Heart right ventricle (tissue), 16 donors: ENCODE measurements at regions of chr10 and their contacts with region 1.

Region 1: GRCh38 chr10:86376852-86377796 is 10.5 kb upstream of the GRID1 start:
- DNase-seq: peak; percentile 56 to 80
- ATAC-seq: peak; percentile 83 to 93 (median 90)
- H3K4me3 ChIP-seq: peak overlapping the region in 7 of 10 donors; percentile 15 to 31 (median 26)
- H3K27ac ChIP-seq: no peak overlapping the region
- H3K4me1 ChIP-seq: peaks cover 0 to 6% (median 3%) of the 10 kb centered on the region in 9 donors
- H3K27me3 ChIP-seq: peaks cover 0 to 89% (median 64%) of the 10 kb centered on the region in 7 donors
- CTCF ChIP-seq: peak; percentile 96 to 100 (median 99)

Region 2: GRCh38 chr10:84613336-84614021 is 1763.6 kb before region 1 on chr10:
- intact Hi-C with region 1: loop called in 1 of 10 experiments (anchors 5 kb)
- DNase-seq: peak in 1 of 2 donors; percentile 9
- ATAC-seq: peak; percentile 61 to 95 (median 86)
- H3K4me3 ChIP-seq: no peak overlapping the region
- H3K27ac ChIP-seq: no peak overlapping the region
- H3K4me1 ChIP-seq: no peaks in the 10 kb centered on the region
- H3K27me3 ChIP-seq: peaks cover 0 to 8% (median 0%) of the 10 kb centered on the region in 7 donors
- CTCF ChIP-seq: peak; percentile 12 to 57 (median 49)

Region 3: GRCh38 chr10:84925495-84925894 is 1451.6 kb before region 1 on chr10:
- intact Hi-C with region 1: loop called in 2 of 10 experiments (anchors 5 kb)
- DNase-seq: no peak
- ATAC-seq: no peak
- H3K4me3 ChIP-seq: no peak overlapping the region
- H3K27ac ChIP-seq: no peak overlapping the region
- H3K4me1 ChIP-seq: no peaks in the 10 kb centered on the region
- H3K27me3 ChIP-seq: no peaks in the 10 kb centered on the region
- CTCF ChIP-seq: no peak

Region 4: DNA sequence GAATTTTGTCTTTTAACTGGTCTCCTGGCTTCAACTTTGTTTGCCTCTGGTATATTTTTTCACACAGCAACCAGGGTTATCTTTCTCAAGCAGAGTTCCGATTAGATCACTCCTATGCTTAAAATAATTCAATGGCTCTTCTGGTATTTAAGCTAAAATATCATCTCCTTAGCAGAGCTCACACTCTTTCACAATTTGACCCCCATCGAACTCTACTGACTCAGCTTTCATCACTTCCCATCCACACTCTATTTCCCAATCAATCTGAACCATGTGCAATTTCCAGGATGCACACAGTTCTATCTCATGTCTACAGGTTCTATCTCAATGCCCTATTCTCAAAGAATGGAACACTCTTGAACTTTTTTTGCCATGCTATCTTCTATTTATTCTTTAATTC is 820.0 kb before region 1 on chr10:
- intact Hi-C with region 1: loop called in 1 of 10 experiments (anchors 10 kb)
- DNase-seq: no peak
- ATAC-seq: peak in 1 of 8 donors; percentile 61
- H3K4me3 ChIP-seq: no peak overlapping the region
- H3K27ac ChIP-seq: no peak overlapping the region
- H3K4me1 ChIP-seq: no peaks in the 10 kb centered on the region
- H3K27me3 ChIP-seq: no peaks in the 10 kb centered on the region
- CTCF ChIP-seq: no peak

Region 5: DNA sequence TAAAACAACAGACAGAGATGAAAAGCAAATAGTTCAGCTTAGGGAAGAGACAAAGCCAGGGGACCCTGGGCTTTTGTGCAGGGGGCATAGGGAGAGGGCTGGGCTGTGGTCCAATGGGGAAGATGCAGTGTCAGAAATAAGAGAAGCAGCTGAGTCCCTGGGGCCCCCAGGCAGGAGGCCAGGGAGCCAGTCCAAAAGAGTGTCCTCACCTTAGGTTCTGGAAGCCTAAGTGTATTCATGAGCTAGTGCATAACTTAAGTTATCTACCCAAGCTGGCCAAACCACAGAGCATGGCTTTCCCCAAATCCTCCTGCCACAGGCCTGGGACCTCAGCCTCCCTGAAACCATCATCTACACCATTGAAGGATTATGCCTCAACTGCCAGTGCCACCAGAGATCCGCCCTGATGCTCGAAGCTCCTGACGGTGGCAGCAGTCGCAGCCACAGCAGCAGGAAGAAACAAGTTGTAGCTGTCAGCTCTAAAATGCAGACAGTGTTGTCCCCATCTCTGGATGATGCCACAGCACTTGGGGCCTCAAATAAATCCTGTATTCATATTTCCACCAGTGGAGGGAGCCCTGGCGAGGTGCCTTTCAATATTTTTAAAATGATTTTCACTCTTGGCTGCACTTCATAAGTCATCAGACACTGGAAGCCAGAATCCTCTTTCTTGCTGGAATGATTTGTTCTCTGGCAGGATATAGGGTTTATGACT is 585.1 kb before region 1 on chr10:
- intact Hi-C with region 1: loop called in 8 of 10 experiments (anchors 5 to 10 kb)
- DNase-seq: no peak
- ATAC-seq: peak in 3 of 8 donors; percentile 16 to 62 (median 45)
- H3K4me3 ChIP-seq: no peak overlapping the region
- H3K27ac ChIP-seq: no peak overlapping the region
- H3K4me1 ChIP-seq: peaks cover 0 to 16% (median 5%) of the 10 kb centered on the region in 9 donors
- H3K27me3 ChIP-seq: no peaks in the 10 kb centered on the region
- CTCF ChIP-seq: peak in 6 of 9 donors; percentile 27 to 54 (median 40)

Region 6: GRCh38 chr10:86100581-86101061 is 276.5 kb before region 1 on chr10:
- intact Hi-C with region 1: loop called in 1 of 10 experiments (anchors 10 kb)
- DNase-seq: no peak
- ATAC-seq: peak in 1 of 8 donors; percentile 65
- H3K4me3 ChIP-seq: no peak overlapping the region
- H3K27ac ChIP-seq: no peak overlapping the region
- H3K4me1 ChIP-seq: no peaks in the 10 kb centered on the region
- H3K27me3 ChIP-seq: no peaks in the 10 kb centered on the region
- CTCF ChIP-seq: peak in 8 of 9 donors; percentile 9 to 54 (median 34)

Region 7: DNA sequence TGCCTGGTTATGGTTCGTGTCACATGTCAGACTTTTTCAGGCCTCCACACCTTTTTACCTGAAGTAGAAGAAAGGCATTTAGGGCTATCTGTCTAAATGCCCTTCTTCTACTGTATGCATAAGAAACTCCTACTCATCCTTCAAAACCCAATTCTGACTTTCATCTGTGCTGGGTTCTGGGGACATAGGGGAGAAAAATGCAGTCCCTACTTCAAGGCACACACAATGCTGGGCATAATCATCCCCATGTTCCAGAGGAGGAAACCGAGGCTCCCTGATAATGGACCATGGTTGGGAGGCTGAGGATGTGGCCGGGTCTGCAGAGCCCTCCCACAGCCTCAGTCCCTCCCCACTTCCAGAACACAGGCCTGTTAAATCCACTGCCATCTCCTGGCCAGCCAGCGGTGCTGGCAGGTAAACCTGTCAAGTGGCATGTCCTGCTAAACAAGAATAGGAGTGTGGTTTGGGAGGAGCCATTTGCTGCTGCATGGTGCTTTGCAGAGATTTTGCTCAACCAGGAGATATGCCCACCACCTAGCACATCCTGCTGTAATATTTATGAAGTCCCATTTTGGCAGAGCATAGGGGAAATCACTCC is 42.5 kb before region 1 on chr10:
- intact Hi-C with region 1: no loop called
- DNase-seq: no peak
- ATAC-seq: no peak
- H3K4me3 ChIP-seq: no peak overlapping the region
- H3K27ac ChIP-seq: no peak overlapping the region
- H3K4me1 ChIP-seq: no peaks in the 10 kb centered on the region
- H3K27me3 ChIP-seq: peaks cover 0 to 4% (median 0%) of the 10 kb centered on the region in 7 donors
- CTCF ChIP-seq: no peak

Region 8: GRCh38 chr10:86440874-86441843 is 64.0 kb after region 1 on chr10:
- intact Hi-C with region 1: no loop called
- DNase-seq: no peak
- ATAC-seq: no peak
- H3K4me3 ChIP-seq: no peak overlapping the region
- H3K27ac ChIP-seq: peak overlapping the region in 1 of 10 donors; percentile 36
- H3K4me1 ChIP-seq: peaks cover 0 to 24% (median 0%) of the 10 kb centered on the region in 9 donors
- H3K27me3 ChIP-seq: no peaks in the 10 kb centered on the region
- CTCF ChIP-seq: no peak